ENCODE measurements at regions of chr1 and their contacts with region 1.

Region 1: GRCh38 chr1:67500413-67500959 is 70.3 kb upstream of the SERBP1 start:
- DNase-seq: peak; percentile 99

Region 2: DNA sequence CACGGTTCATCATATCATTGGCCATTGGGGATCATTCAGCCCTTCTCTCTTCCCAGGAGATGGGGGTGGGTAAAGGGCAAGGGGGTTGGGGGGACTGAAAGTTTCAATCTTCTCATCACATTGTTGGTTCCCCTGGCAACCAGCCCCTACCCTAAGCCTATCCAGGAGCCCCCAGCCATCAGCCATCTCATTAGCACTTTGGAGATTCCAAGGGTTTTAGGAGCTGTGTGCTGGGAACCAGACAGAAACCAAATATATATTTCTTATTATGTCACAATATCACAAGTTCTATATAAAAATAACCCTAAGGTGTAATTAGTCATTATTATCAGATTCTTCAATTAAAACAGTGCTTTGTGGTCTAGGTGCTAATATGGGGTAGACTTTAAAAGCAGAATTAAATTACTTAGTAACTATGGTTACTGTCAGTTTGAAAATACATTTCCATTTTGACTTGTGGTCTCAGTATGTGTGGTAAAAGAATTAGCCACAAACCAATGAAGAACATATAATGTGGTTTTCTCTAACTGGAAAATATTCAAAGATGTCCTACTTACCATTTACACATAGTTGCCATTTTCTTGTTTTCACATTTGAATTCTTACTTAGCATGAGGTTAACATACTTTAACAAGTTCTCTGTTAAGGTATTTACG is 306.1 kb before region 1 on chr1:
- CTCF ChIA-PET with region 1: no interaction called
- POLR2A ChIA-PET with region 1: no interaction called
- DNase-seq: no peak

Region 3: GRCh38 chr1:67285780-67286488 is 214.6 kb before region 1 on chr1:
- CTCF ChIA-PET with region 1: no interaction called
- POLR2A ChIA-PET with region 1: no interaction called
- DNase-seq: no peak

Region 4: GRCh38 chr1:67347688-67348472 is 152.6 kb before region 1 on chr1:
- CTCF ChIA-PET with region 1: interaction called, 30 read pairs
- POLR2A ChIA-PET with region 1: interaction called, 4 read pairs
- DNase-seq: peak; percentile 84

Region 5: GRCh38 chr1:67460676-67461500 is 39.6 kb before region 1 on chr1:
- CTCF ChIA-PET with region 1: no interaction called
- POLR2A ChIA-PET with region 1: no interaction called
- DNase-seq: no peak

Region 6: GRCh38 chr1:67489643-67490042 is 10.8 kb before region 1 on chr1:
- CTCF ChIA-PET with region 1: interaction called, 10 read pairs
- POLR2A ChIA-PET with region 1: no interaction called
- DNase-seq: peak; percentile 58

Measured in HEK293T (cell line).